ENCODE measurements at regions of chr1 and their contacts with region 1.

Region 1: DNA sequence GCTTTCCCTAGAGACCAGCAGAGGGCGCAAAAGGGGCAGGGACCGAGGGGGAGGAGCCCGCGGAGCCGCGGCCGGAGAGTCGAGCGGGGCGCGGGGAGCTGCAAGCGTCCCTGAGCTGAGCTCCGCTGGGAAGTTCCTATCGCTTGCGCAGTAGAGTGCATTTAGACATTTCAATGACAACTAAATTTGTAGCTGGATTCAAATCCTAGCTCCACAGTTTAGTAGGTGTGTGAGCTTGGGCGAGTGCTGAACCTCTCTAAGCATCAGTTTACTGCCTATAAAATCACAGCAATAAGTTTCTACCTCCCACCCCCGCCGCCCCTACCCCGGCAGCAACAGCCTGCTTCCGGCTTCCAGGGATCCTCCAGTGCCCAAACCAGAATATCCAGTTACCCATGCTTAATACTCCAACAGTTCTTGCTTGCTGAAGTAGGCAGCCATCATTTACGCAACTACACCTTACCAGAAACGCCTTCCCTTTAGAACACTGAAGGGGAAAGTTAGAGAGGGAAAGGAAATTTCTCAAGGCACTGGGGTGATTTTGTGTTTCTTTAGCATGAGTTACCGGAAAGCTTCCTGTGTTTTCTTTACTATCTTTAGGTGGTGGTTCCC is 9.1 kb downstream of the TLR5 start:
- DNase-seq: peak; percentile 91 to 94
- ATAC-seq: peak; percentile 94
- H3K4me3 ChIP-seq: peak overlapping the region; percentile 13 to 58
- H3K27ac ChIP-seq: peak overlapping the region in 1 of 2 donors; percentile 47
- H3K4me1 ChIP-seq: no peaks in the 10 kb centered on the region
- H3K27me3 ChIP-seq: no peaks in the 10 kb centered on the region

Region 2: GRCh38 chr1:222865718-222866117 is 268.2 kb before region 1 on chr1:
- intact Hi-C with region 1: no loop called
- DNase-seq: no peak
- ATAC-seq: no peak
- H3K4me3 ChIP-seq: no peak overlapping the region
- H3K27ac ChIP-seq: no peak overlapping the region
- H3K4me1 ChIP-seq: no peaks in the 10 kb centered on the region
- H3K27me3 ChIP-seq: no peaks in the 10 kb centered on the region

Region 3: GRCh38 chr1:223363856-223364684 is 230.1 kb after region 1 on chr1 and contains the start of gene SUSD4:
- intact Hi-C with region 1: loop called in 1 of 2 experiments (anchors 10 kb)
- DNase-seq: peak in 1 of 2 donors; percentile 80
- ATAC-seq: peak; percentile 69
- H3K4me3 ChIP-seq: peak within 1 kb of the TSS; percentile 23 to 60
- H3K27ac ChIP-seq: no peak within 1 kb of the TSS
- H3K4me1 ChIP-seq: no peaks in the 10 kb centered on the region
- H3K27me3 ChIP-seq: peaks cover 0 to 2% of the 10 kb centered on the region in 2 donors
- total RNA-seq, gene SUSD4: 0.52 to 0.81 TPM

Region 4: DNA sequence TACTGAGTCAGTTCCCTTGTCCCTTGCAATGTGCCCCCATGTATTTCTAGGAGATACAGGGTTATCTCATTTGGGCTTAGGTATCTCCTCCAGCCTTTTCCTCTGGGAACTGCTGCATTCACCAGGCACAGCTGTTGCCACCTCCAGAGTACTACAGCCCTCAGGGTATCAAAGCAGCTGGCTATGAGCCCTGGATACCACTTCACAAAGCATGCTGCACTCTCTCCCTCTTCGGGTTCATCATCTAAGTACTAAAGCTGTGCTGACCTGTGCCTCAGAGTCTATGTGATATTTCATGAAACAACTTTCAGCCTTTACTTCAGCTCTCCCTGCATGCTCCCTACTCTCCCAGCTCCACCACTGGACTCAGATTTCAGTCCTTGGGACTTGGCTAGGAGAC is 321.5 kb after region 1 on chr1:
- intact Hi-C with region 1: no loop called
- DNase-seq: no peak
- ATAC-seq: no peak
- H3K4me3 ChIP-seq: no peak overlapping the region
- H3K27ac ChIP-seq: no peak overlapping the region
- H3K4me1 ChIP-seq: no peaks in the 10 kb centered on the region
- H3K27me3 ChIP-seq: no peaks in the 10 kb centered on the region

Region 5: GRCh38 chr1:223683586-223684487 is 549.9 kb after region 1 on chr1:
- intact Hi-C with region 1: loop called (anchors 5 kb)
- DNase-seq: no peak
- ATAC-seq: no peak
- H3K4me3 ChIP-seq: no peak overlapping the region
- H3K27ac ChIP-seq: no peak overlapping the region
- H3K4me1 ChIP-seq: no peaks in the 10 kb centered on the region
- H3K27me3 ChIP-seq: peaks cover 0 to 1% of the 10 kb centered on the region in 2 donors

Measured in aorta (tissue), 5 donors.